PC-9 (cell line): ENCODE measurements at regions of chr17 and their contacts with region 1.

Region 1: GRCh38 chr17:37358830-37359681 is 16.7 kb upstream of the C17orf78 start:
- DNase-seq: peak; percentile 88 to 98
- H3K4me3 ChIP-seq: peak overlapping the region; percentile 97
- H3K27ac ChIP-seq: peak overlapping the region; percentile 88
- H3K4me1 ChIP-seq: peaks cover 51% of the 10 kb centered on the region
- H3K27me3 ChIP-seq: no peaks in the 10 kb centered on the region
- CTCF ChIP-seq: no peak

Region 2: DNA sequence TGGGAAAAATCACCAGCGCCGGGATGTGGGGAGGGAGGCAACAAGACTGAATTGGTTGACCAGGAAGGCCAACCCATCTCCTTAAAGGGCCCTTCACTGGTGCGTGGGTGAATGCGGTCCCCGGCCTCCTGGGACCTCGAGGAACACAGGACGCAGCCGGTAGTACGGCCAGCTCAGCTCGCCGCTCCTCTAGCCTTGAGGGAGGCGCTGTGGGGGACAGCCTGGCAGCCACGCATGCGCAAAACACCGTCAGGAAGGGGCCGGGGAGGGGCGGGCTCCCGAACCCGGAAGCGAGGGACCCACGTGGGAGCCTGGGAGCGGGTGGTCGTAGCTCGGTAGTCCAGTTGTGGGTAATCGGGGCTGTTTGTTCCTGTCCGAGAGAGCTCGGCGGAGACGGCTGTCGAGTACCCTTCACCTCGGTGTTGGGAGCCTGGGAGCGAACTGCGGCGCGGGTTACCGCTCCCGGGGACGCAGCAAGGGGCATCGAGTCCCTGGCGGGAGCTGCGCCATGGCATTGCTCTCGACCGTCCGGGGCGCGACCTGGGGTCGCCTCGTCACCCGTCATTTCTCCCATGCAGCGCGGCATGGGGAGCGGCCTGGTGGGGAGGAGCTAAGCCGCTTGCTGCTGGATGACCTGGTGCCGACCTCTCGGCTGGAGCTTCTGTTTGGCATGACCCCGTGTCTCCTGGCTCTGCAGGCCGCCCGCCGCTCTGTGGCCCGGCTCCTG is 757.6 kb before region 1 on chr17 and contains the start of gene MRM1:
- CTCF ChIA-PET with region 1: no interaction called
- POLR2A ChIA-PET with region 1: no interaction called
- intact Hi-C with region 1: loop called (anchors 5 kb)
- DNase-seq: peak; percentile 86 to 90
- H3K4me3 ChIP-seq: peak within 1 kb of the TSS; percentile 77
- H3K27ac ChIP-seq: peak within 1 kb of the TSS; percentile 65
- H3K4me1 ChIP-seq: peaks cover 8% of the 10 kb centered on the region; the same call in 1 of the 2 replicates
- H3K27me3 ChIP-seq: no peaks in the 10 kb centered on the region
- CTCF ChIP-seq: no peak
- total RNA-seq, gene MRM1: 9.6 and 10.9 TPM in 2 replicates

Region 3: GRCh38 chr17:37276527-37276926 is 82.5 kb before region 1 on chr17:
- CTCF ChIA-PET with region 1: no interaction called
- POLR2A ChIA-PET with region 1: no interaction called
- intact Hi-C with region 1: loop called (anchors 2 kb)
- DNase-seq: peak; percentile 49 to 88
- H3K4me3 ChIP-seq: no peak overlapping the region
- H3K27ac ChIP-seq: peak overlapping the region; percentile 74
- H3K4me1 ChIP-seq: peaks cover 51% of the 10 kb centered on the region
- H3K27me3 ChIP-seq: no peaks in the 10 kb centered on the region
- CTCF ChIP-seq: no peak

Region 4: DNA sequence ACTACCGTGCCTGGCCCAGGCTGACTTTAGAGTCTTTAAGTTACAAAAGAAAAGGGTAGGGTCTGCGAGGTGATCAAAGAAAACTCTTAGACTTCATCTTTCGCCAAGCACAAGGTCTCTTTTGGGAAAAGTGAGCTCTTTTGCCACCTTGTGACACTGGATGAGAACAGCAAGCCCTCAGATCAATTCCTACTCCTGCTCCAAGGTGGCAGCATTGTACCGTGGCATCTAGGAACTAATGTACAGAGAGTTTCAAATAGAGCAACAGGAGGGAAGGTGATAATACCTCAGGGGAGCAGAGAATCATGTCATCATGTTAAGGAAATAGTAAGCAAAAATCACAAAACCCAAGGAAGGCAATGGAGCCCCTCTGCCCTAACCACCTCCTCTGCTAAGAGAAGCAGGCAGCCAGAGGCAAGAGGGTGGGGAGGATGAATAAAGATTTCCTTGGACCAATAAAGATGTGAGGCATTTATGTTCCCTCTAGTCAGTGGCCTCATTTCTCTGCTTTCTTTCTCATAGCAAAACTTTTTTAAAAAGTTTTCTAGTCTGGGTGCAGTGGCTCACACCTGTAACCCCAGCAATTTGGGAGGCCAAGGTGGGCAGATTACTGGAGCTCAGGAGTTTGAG is 14.6 kb after region 1 on chr17:
- CTCF ChIA-PET with region 1: interaction called, 3 read pairs
- POLR2A ChIA-PET with region 1: interaction called, 21 read pairs
- intact Hi-C with region 1: no loop called
- DNase-seq: peak; percentile 73
- H3K4me3 ChIP-seq: no peak overlapping the region
- H3K27ac ChIP-seq: no peak overlapping the region
- H3K4me1 ChIP-seq: no peaks in the 10 kb centered on the region
- H3K27me3 ChIP-seq: no peaks in the 10 kb centered on the region
- CTCF ChIP-seq: peak; percentile 96

Region 5: GRCh38 chr17:37399404-37399803 is 40.3 kb after region 1 on chr17:
- CTCF ChIA-PET with region 1: no interaction called
- POLR2A ChIA-PET with region 1: no interaction called
- intact Hi-C with region 1: loop called (anchors 5 kb)
- DNase-seq: peak; percentile 53 to 92
- H3K4me3 ChIP-seq: no peak overlapping the region
- H3K27ac ChIP-seq: peak overlapping the region; percentile 40
- H3K4me1 ChIP-seq: peaks cover 32% of the 10 kb centered on the region
- H3K27me3 ChIP-seq: no peaks in the 10 kb centered on the region
- CTCF ChIP-seq: no peak

Region 6: DNA sequence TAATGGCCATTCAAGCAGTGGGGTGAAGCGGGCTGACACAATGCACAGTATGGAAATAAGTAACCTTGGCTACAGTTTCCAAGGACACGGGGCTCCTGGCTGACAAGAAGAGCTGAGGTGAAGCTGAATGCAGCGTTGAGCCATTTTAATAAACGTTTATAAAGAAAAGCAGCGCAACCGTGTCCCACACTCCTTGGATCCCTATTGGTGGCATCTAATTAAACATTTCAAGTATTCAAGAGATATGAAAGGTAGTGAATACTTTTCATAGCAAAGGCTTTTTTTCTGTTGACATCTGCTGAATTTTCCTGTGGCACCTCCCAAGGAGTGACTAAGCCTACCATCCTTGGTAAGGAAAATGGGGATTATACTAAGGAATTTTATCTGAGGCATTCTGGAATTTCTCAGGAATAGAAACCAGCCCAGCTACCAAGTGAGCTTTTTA is 157.1 kb after region 1 on chr17:
- CTCF ChIA-PET with region 1: no interaction called
- POLR2A ChIA-PET with region 1: no interaction called
- intact Hi-C with region 1: no loop called
- DNase-seq: no peak
- H3K4me3 ChIP-seq: no peak overlapping the region
- H3K27ac ChIP-seq: no peak overlapping the region
- H3K4me1 ChIP-seq: no peaks in the 10 kb centered on the region
- H3K27me3 ChIP-seq: no peaks in the 10 kb centered on the region
- CTCF ChIP-seq: no peak